Activated CD8-positive, alpha-beta memory T cell treated with anti-CD3 and anti-CD28 coated beads, Interleukin-2, amount 10 ng/mL, durations not matched to agents 7 days and 5 days (primary cell): ENCODE measurements at regions of chr4 and their contacts with region 1.

Region 1: DNA sequence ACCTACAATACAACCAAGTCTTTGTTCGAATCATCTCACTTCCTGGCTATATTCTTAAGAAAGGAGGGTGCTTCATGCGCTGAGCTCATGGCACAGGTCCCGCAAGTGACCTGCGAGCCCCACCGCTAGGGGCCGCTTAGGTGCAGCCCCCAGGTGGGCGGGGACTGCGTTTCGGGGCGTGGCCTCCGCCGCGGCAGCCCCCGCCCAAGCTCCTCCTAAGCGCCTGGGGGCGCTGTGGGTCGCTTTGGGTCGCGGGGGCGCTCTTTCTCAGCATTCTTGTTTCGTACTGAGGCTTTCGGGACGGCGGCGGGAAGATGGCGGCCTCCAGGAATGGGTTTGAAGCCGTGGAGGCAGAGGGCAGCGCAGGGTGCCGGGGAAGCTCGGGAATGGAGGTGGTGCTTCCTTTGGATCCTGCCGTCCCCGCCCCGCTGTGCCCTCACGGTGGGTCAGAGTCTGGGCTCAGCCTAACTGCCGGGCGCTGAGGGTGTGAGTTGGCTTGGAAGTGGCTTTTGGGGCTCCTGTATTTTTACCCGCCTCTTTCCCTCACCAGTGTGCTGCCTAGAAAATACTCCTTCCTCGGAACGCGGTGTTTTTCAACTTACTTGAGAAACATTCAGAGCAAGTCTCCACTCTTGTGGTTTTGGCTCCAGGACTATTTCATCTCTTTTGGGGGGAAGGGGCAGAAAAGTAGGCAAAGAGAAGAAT is at the start of gene ZCCHC4:
- DNase-seq: peak; percentile 91
- ATAC-seq: peak; percentile 98
- H3K4me3 Mint-ChIP-seq: peak within 1 kb of the TSS; percentile 98
- H3K27ac Mint-ChIP-seq: peak within 1 kb of the TSS; percentile 94
- H3K4me1 Mint-ChIP-seq: peaks cover 38% of the 10 kb centered on the region
- H3K27me3 Mint-ChIP-seq: no peaks in the 10 kb centered on the region
- total RNA-seq, gene ZCCHC4: 11.1 to 13.8 TPM

Region 2: DNA sequence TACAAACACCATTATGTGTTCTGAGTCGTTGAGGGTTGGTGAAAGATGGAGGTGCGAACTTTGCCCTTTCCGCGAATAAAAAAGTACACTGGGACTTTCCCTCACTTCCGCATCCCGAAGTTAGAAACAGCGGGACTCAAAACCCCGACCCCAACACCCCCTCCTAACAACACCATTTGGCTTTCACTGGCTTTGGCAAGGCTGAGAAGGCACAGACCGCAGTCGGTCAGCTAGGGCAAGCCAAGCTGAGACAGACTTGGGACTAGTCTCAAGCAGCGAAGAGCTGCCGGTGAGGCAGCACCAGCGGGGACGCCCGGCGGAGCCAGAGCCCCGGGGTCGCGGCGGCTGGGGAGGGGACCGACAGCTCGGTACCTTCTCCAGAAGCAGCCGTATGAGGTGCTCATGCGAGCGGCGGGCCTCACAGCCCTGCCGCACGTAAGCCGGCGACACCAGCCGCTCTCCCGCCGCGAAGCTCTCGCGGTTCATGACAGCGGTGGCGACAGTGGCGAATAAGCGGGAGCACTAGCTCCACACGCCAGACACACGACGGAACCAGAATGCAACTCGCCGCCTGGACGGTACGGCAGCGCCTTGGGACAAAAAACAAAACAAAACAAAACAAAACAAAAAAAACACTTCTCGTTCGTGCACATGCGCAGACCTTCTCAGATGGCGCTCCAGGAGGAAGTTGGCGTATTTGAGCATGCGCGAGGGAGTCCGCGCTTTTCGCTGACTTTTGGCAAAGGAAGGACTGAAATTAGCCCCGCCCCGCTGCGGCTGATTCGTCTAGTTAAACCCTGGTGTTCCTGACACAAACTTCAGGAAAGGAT is 152.5 kb before region 1 on chr4 and contains the start of gene SEPSECS:
- CTCF ChIA-PET with region 1: interaction called, 24 read pairs
- DNase-seq: peak; percentile 97
- ATAC-seq: peak; percentile 87
- H3K4me3 Mint-ChIP-seq: peak within 1 kb of the TSS; percentile 83
- H3K27ac Mint-ChIP-seq: peak within 1 kb of the TSS; percentile 90
- H3K4me1 Mint-ChIP-seq: peaks cover 42% of the 10 kb centered on the region
- H3K27me3 Mint-ChIP-seq: no peaks in the 10 kb centered on the region
- total RNA-seq, gene SEPSECS: 12.9 TPM

Region 3: DNA sequence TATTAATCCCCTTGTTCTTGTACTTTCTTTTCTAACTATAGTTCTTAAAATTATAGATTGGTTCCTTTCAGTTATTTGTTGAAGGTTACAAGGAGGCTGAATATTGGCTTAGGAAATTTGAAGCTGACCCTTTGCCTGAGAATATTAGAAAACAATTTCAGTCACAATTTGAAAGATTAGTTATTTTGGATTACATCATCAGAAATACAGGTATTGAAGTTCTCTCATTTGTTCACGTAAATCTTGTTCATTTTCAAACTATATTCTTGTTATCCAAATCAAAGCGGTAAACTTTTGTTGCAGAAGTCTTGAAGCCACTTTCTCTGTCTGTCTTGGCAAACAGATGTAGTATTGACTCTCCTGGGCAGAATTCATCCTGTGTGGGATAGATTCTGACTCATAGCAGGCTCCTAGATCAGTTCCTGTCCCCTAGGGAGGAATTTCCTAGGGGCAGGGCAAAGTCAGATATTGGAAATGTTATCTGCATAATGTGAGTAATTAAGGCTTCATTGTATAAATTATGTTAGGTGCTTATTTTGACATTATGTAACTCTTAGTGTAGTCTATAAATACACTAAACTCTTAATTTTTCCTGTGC is 53.6 kb before region 1 on chr4:
- CTCF ChIA-PET with region 1: interaction called, 11 read pairs
- DNase-seq: no peak
- ATAC-seq: no peak
- H3K4me3 Mint-ChIP-seq: no peak overlapping the region
- H3K27ac Mint-ChIP-seq: no peak overlapping the region
- H3K4me1 Mint-ChIP-seq: no peaks in the 10 kb centered on the region
- H3K27me3 Mint-ChIP-seq: no peaks in the 10 kb centered on the region

Region 4: GRCh38 chr4:25330905-25331808 is 18.5 kb after region 1 on chr4:
- CTCF ChIA-PET with region 1: interaction called, 59 read pairs
- DNase-seq: no peak
- ATAC-seq: peak; percentile 93
- H3K4me3 Mint-ChIP-seq: peak overlapping the region; percentile 79
- H3K27ac Mint-ChIP-seq: peak overlapping the region; percentile 98
- H3K4me1 Mint-ChIP-seq: peaks cover 19% of the 10 kb centered on the region
- H3K27me3 Mint-ChIP-seq: no peaks in the 10 kb centered on the region

Region 5: DNA sequence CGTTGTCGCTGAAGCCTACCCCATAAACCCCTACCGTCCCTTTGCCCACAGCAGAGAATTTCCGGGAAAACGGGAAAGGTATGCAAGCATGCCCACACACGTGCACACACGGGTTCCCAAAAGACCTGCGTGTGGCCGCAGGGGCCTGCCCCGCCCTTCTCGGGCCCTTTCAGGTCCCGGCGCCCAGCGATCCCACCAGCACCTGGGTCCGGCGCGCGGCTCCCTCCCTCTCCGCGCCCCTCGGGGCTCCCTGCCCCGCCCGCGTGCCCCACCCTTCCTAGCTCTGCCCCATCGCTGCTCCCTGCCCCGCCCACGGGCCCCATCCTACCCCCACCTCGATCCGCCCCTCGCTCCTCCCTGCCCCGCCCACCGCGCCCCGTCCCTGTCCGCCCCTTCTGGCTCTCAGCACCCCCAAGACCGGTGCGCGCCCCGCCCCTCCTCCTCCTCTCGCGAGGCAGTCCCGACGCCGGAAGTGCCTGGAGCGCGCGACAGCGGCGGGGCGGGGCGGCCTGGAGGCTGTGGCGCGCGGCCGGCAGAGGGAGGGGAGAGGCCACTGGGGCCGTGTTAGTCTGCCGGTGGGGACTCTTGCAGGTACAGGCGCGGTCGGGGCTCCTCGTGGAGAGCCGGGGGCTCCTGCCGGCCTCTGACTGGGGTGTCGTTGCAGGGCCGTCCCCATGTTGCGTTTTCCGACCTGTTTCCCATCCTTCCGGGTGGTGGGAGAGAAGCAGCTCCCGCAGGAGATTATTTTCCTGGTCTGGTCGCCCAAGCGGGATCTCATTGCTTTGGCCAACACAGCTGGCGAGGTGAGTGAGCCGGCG is 64.3 kb after region 1 on chr4 and contains the start of gene ANAPC4:
- CTCF ChIA-PET with region 1: interaction called, 18 read pairs
- DNase-seq: peak; percentile 99
- ATAC-seq: peak; percentile 98
- H3K4me3 Mint-ChIP-seq: no peak within 1 kb of the TSS
- H3K27ac Mint-ChIP-seq: peak within 1 kb of the TSS; percentile 89
- H3K4me1 Mint-ChIP-seq: peaks cover 15% of the 10 kb centered on the region
- H3K27me3 Mint-ChIP-seq: no peaks in the 10 kb centered on the region
- total RNA-seq, gene ANAPC4: 48.7 to 56.0 TPM